ENCODE measurements at regions of chr3 and their contacts with region 1.

Region 1: GRCh38 chr3:190617185-190617584 is 103.3 kb downstream of the IL1RAP start:
- DNase-seq: peak; percentile 97 to 99 (median 97)
- H3K4me3 ChIP-seq: peak overlapping the region in 1 of 3 experiments; percentile 29
- H3K4me3 Mint-ChIP-seq: peak overlapping the region in 1 of 2 donors; percentile 69
- H3K27ac ChIP-seq: peak overlapping the region; percentile 25 to 86
- H3K27ac Mint-ChIP-seq: peak overlapping the region; percentile 90 to 98 (median 97)
- H3K4me1 ChIP-seq: peaks cover 62 to 74% of the 10 kb centered on the region in 2 donors
- H3K4me1 Mint-ChIP-seq: peaks cover 67% of the 10 kb centered on the region
- H3K27me3 ChIP-seq: no peaks in the 10 kb centered on the region
- H3K27me3 Mint-ChIP-seq: peaks cover 0 to 2% (median 0%) of the 10 kb centered on the region in 3 donors
- CTCF ChIP-seq: no peak

Region 2: DNA sequence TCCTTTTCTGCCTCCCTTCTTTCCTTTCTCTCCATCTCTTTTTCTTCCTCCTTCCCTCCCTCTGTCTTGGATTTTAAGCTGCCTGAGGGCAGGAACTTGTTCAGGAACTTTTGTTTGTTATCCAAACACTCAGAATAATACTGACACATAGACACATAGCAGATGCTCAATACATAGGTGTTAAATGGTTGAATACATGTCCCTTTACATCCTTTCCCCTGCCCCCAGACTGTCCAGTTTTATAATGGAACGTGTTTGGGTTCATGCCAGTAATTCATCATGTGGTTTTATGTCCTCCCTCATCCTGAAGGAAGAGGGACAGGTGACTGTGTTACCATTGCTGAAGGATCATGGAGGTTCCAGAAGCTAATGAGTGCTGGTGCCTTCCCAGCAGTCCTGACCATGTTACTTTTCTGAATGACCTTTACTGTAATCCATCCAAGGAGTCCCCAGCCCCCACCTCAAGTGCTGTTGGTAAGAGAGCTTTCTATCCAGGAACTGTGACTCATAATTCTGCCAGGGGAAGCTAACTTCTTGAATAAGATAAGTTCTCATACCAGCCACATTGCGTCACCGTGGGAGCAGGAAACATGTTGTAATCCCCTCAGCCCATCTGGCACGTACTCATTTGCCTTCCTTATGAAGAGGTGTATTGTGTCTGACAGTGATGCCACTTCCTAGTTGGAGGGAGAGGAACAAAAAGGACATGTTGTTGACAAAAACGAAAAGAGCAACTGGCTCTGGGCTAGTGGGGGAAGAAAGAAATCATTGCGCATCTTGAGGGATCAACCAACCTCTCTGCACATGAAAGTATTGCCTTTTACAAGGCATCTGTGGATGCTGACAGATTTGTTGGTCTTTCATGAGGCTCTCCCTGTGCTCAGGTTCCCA is 50.9 kb before region 1 on chr3:
- intact Hi-C with region 1: loop called (anchors 5 kb)
- DNase-seq: peak; percentile 99 to 100 (median 100)
- H3K4me3 ChIP-seq: peak overlapping the region in 2 of 3 experiments; percentile 22 to 39
- H3K4me3 Mint-ChIP-seq: peak overlapping the region; percentile 36 to 39
- H3K27ac ChIP-seq: peak overlapping the region in 1 of 2 donors; percentile 90
- H3K27ac Mint-ChIP-seq: peak overlapping the region; percentile 90 to 97 (median 95)
- H3K4me1 ChIP-seq: peaks cover 17% of the 10 kb centered on the region in 2 donors
- H3K4me1 Mint-ChIP-seq: peaks cover 18% of the 10 kb centered on the region
- H3K27me3 ChIP-seq: no peaks in the 10 kb centered on the region
- H3K27me3 Mint-ChIP-seq: no peaks in the 10 kb centered on the region
- CTCF ChIP-seq: no peak

Region 3: DNA sequence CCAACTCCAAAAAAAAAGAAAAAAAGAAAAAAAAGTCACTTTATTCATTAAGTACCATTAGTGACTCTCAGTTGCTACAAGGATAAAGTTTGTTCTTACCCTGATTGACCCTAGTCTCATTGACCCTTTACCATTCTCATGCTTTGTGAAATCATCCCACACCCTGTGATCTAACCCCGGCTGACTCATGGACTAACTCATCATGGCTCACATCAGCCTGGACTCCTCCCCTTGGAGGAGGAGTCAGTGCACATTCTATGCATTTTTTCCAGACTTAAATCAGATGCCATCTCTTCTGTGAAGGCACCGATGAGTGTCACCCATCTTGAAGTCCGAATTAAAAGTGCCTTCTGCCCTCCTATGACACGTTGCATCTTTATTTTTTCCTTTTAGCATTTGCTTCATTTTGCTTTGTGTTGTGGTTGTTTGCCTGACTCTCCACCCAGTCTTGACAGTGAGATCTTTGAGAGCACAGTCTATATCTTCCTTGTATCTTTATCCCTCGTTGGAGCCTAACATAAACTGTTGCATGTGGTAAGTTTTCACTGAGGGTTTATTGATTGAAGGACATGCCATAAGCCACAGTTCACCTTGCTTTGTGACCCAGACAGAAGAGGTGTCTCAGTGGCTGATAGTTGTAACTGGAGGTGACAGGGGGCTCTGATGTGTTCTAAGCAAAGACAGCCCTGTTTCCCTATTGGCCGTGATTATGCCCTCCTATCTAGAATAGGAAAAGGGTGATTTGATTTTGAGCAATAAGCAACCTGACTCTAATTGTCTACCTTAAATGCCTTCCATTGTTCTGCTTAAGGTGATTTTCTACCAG is 31.2 kb before region 1 on chr3:
- intact Hi-C with region 1: loop called (anchors 2 to 5 kb)
- DNase-seq: peak; percentile 91 to 93 (median 91)
- H3K4me3 ChIP-seq: no peak overlapping the region
- H3K4me3 Mint-ChIP-seq: no peak overlapping the region
- H3K27ac ChIP-seq: peak overlapping the region in 1 of 2 donors; percentile 72
- H3K27ac Mint-ChIP-seq: peak overlapping the region; percentile 63 to 92 (median 91)
- H3K4me1 ChIP-seq: peaks cover 33 to 40% of the 10 kb centered on the region in 2 donors
- H3K4me1 Mint-ChIP-seq: peaks cover 43% of the 10 kb centered on the region
- H3K27me3 ChIP-seq: no peaks in the 10 kb centered on the region
- H3K27me3 Mint-ChIP-seq: peaks cover 0 to 3% (median 1%) of the 10 kb centered on the region in 3 donors
- CTCF ChIP-seq: no peak

Region 4: DNA sequence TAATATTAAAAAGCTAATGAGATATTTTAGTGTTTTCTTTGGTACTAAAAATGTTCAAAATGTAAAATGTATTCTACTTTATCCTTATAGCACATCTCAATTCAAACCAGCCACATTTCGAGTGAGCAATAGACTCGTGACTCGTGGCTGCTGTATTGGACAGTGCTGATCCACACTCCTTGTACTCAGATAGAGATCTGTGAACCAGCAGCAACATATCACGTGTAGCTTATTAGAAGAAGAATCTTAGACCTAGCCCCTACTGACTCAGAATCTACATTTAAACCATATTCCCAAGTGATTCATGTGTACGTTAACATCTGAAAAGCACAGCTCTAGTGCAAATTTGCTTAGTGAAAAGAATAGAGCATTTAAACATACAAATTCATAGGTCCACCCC is 27.6 kb after region 1 on chr3:
- intact Hi-C with region 1: no loop called
- DNase-seq: no peak
- H3K4me3 ChIP-seq: no peak overlapping the region
- H3K4me3 Mint-ChIP-seq: no peak overlapping the region
- H3K27ac ChIP-seq: no peak overlapping the region
- H3K27ac Mint-ChIP-seq: peak overlapping the region in 1 of 7 donors; percentile 16
- H3K4me1 ChIP-seq: no peaks in the 10 kb centered on the region
- H3K4me1 Mint-ChIP-seq: peaks cover 4% of the 10 kb centered on the region
- H3K27me3 ChIP-seq: no peaks in the 10 kb centered on the region
- H3K27me3 Mint-ChIP-seq: peaks cover 0 to 2% (median 0%) of the 10 kb centered on the region in 3 donors
- CTCF ChIP-seq: no peak